GM23248 (cell line): ENCODE measurements at regions of chr9 and their contacts with region 1.

Region 1: DNA sequence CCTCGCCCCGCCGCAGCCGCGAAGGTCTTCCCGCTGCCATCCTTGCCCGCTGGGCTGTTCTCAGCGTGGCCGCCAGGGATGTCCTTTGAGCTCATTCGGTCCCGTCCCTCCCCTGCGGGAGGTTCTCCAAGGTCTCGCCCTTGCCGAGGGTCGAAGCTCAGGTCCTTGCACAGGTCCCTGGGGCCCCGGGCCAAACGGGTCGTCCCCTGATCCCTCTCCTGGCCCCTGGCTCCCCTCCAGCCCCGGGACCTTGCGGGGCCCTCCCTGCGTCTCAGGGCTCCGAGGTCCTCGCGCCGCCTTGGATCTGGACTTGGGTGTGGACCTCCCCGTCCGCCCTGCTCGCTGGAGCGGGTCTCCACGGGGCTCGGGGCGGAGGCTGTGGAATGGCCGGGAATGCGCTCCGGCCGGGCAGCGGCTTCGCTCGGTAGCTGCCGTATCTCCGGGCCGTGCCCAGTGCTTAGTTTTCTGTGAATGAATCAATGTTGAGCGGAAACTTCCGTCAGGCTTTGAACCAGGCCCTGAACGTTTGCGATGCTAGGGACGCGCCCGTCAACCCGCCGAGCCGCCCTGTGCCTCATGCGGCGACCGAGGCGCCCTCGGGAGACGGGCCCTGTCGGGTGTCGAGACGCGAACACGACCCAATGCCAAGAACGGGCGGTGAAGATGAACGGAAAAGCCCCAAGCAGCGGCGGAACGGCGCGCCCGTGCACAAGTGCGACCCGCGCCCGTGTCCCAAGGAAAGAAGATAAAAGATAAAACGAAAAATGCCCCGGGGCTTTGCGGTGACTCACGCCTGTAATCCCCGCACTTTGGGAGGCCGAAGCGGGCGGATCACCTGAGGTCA is 789 bp downstream of the RNU6ATAC start:
- DNase-seq: peak; percentile 77
- H3K4me3 ChIP-seq: no peak overlapping the region
- H3K27ac ChIP-seq: no peak overlapping the region
- H3K4me1 ChIP-seq: peaks cover 14% of the 10 kb centered on the region
- H3K27me3 ChIP-seq: no peaks in the 10 kb centered on the region

Region 2: DNA sequence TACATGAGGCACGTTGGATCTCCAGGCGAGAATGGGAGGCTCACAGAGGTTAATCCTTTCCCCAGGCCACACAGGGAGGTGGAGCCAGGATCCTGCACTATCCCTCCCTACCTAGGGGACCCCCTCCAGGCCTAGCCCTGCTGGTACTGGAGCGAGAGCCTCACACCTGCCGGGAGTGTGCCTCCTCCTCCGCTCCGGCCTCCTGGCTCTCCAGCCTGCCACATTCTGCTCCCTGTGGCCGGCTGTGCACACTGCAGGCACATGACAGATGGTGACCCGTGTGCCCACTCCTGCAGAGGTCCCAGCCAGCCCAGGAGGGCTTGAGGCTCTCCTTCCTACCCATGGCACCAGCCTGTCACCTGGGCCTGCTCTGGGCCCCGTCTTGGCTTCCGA is 256.1 kb after region 1 on chr9:
- in situ Hi-C with region 1: loop called (anchors 10 kb)
- DNase-seq: peak; percentile 37
- H3K4me3 ChIP-seq: no peak overlapping the region
- H3K27ac ChIP-seq: no peak overlapping the region
- H3K4me1 ChIP-seq: peaks cover under 1% of the 10 kb centered on the region; the same call in 1 of the 2 replicates
- H3K27me3 ChIP-seq: no peaks in the 10 kb centered on the region